AG04449 (cell line): ENCODE measurements at regions of chr10 and their contacts with region 1.

Region 1: GRCh38 chr10:87734987-87735827 is 75.5 kb downstream of the PAPSS2 start:
- DNase-seq: no peak
- H3K4me3 ChIP-seq: no peak overlapping the region
- CTCF ChIP-seq: peak; percentile 44

Region 2: GRCh38 chr10:87531908-87532622 is 203.1 kb before region 1 on chr10:
- CTCF ChIA-PET with region 1: interaction called, 14 read pairs
- POLR2A ChIA-PET with region 1: no interaction called
- DNase-seq: no peak
- H3K4me3 ChIP-seq: no peak overlapping the region
- CTCF ChIP-seq: no peak

Region 3: GRCh38 chr10:87562750-87563149 is 172.5 kb before region 1 on chr10:
- CTCF ChIA-PET with region 1: no interaction called
- POLR2A ChIA-PET with region 1: no interaction called
- DNase-seq: no peak
- H3K4me3 ChIP-seq: no peak overlapping the region
- CTCF ChIP-seq: no peak

Region 4: GRCh38 chr10:87721781-87722180 is 13.4 kb before region 1 on chr10:
- CTCF ChIA-PET with region 1: interaction called, 10 read pairs
- POLR2A ChIA-PET with region 1: no interaction called
- DNase-seq: no peak
- H3K4me3 ChIP-seq: no peak overlapping the region
- CTCF ChIP-seq: no peak